Mammary epithelial cell (primary cell): ENCODE measurements at regions of chr15 and their contacts with region 1.

Region 1: GRCh38 chr15:50377867-50378751 is 23.1 kb upstream of the GABPB1 start:
- DNase-seq: no peak
- H3K4me3 ChIP-seq: no peak overlapping the region
- H3K27ac ChIP-seq: no peak overlapping the region
- H3K4me1 ChIP-seq: no peaks in the 10 kb centered on the region
- H3K27me3 ChIP-seq: no peaks in the 10 kb centered on the region
- CTCF ChIP-seq: no peak

Region 2: DNA sequence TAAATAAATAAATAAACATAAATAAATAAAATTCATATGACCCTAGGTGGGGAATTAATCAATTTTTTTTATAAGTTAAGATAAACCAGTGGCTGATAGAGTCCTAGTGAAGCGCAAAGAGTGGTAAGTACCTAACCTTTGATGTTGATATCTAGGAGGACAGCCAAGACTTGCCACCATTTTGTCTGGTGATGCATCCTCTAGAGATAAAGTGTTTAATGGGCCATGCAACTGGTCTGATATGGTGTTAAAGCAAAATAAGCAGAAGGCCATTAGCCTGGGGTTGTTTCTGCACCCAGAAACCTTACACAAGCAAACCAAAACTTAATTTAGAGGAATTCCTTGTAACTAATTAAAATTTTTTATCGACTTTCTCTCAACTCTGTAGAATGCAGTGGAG is 36.5 kb after region 1 on chr15:
- CTCF ChIA-PET with region 1: no interaction called
- dilution Hi-C with region 1: loop called (anchors 5 kb)
- in situ Hi-C with region 1: no loop called
- intact Hi-C with region 1: no loop called
- DNase-seq: no peak
- H3K4me3 ChIP-seq: no peak overlapping the region
- H3K27ac ChIP-seq: no peak overlapping the region
- H3K4me1 ChIP-seq: no peaks in the 10 kb centered on the region
- H3K27me3 ChIP-seq: no peaks in the 10 kb centered on the region
- CTCF ChIP-seq: no peak

Region 3: GRCh38 chr15:50463423-50464358 is 85.6 kb after region 1 on chr15:
- CTCF ChIA-PET with region 1: no interaction called
- dilution Hi-C with region 1: loop called (anchors 5 kb)
- in situ Hi-C with region 1: no loop called
- intact Hi-C with region 1: no loop called
- DNase-seq: no peak
- H3K4me3 ChIP-seq: no peak overlapping the region
- H3K27ac ChIP-seq: no peak overlapping the region
- H3K4me1 ChIP-seq: no peaks in the 10 kb centered on the region
- H3K27me3 ChIP-seq: no peaks in the 10 kb centered on the region
- CTCF ChIP-seq: no peak